ENCODE measurements at regions of chr1 and their contacts with region 1.

Region 1: DNA sequence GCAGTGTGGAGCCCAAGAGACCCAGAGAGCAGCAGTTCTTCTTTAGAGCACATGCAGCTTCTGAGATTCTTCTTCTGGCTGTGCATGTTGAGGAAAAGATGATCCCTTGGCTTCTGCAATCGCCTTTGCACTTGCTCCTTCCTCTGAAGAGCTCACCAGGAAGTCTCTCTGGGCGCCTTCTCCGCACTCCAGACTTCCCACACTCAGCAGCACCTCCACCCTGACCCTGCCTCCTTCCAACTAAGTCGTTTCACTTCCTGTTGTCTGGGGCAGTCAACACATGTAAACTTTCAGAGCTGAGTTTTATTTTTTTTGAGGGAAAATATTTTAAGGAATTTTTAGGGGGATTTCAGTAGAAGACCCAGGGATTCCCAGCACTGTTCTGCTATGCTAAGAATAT is 73.4 kb upstream of the F3 start:
- H3K4me3 Mint-ChIP-seq: peak overlapping the region; percentile 20
- H3K27ac Mint-ChIP-seq: peak overlapping the region; percentile 65
- H3K4me1 Mint-ChIP-seq: peaks cover 46% of the 10 kb centered on the region
- H3K27me3 Mint-ChIP-seq: no peaks in the 10 kb centered on the region

Region 2: DNA sequence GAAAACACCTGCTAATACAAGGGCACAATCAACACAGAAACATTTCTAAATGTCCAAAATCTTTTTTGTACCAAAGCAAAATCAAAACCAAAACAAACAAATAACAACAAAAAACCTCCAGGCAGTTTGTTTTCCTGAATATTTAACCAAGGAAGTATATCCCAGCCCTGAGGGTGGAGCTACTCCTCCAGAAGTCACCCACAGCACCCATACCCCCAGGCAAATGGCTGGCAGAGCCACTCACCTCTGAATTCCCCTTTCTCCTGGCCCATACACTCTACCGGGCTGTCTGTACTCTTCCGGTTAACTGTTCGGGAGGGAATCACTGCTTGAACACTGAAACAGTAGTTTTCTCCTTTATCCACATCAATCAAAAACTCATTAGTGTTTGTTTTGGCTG is 82.9 kb before region 1 on chr1:
- intact Hi-C with region 1: loop called (anchors 10 kb)
- H3K4me3 Mint-ChIP-seq: no peak overlapping the region
- H3K27ac Mint-ChIP-seq: no peak overlapping the region
- H3K4me1 Mint-ChIP-seq: peaks cover 6% of the 10 kb centered on the region
- H3K27me3 Mint-ChIP-seq: no peaks in the 10 kb centered on the region

Region 3: DNA sequence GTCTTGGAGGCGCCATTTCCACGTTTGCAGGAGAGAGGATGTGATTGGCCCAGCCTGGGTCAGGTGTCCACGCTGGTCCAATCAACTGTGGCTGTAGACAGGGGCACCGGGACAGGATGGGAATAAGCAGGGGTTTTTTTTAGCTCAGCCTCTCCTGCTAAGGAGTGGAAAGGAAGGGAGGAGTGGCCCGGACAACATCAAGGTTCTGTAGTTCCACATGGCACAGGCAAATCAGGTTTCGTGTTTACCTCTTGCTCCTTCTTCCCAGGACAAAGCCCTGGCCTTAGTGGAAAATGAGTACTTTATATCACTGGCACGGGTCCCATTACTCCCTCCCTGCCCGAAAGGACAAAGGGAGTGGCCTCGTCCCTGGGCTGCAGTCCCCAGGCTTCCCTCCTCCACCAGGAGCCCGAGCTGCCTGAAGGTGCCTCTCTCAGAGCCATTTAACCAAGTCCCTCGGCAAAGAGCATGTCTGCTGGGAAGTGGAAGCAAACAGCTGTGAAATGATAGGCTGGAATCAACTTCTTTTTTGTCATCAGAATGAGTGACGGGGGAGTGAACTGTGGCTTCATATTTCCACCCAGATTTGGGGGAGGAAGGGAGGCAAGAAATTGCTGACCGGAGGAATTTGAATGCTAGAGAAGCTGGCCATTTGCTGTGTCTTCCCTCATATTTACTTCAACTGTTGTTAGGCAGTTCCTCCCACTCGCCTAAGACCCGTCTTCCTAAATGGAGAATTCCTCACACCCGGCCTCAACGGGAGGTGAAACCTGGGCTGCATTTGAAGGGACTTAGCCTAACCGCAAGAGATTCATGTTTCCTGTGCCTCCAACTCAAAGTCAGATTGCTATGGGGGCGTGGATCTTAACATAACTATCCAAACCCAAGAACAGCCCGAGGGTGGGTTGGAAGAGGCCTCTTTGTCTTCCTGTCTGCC is 120.2 kb after region 1 on chr1:
- intact Hi-C with region 1: loop called (anchors 10 kb)
- H3K4me3 Mint-ChIP-seq: no peak overlapping the region
- H3K27ac Mint-ChIP-seq: peak overlapping the region; percentile 72
- H3K4me1 Mint-ChIP-seq: peaks cover 49% of the 10 kb centered on the region
- H3K27me3 Mint-ChIP-seq: no peaks in the 10 kb centered on the region

Region 4: DNA sequence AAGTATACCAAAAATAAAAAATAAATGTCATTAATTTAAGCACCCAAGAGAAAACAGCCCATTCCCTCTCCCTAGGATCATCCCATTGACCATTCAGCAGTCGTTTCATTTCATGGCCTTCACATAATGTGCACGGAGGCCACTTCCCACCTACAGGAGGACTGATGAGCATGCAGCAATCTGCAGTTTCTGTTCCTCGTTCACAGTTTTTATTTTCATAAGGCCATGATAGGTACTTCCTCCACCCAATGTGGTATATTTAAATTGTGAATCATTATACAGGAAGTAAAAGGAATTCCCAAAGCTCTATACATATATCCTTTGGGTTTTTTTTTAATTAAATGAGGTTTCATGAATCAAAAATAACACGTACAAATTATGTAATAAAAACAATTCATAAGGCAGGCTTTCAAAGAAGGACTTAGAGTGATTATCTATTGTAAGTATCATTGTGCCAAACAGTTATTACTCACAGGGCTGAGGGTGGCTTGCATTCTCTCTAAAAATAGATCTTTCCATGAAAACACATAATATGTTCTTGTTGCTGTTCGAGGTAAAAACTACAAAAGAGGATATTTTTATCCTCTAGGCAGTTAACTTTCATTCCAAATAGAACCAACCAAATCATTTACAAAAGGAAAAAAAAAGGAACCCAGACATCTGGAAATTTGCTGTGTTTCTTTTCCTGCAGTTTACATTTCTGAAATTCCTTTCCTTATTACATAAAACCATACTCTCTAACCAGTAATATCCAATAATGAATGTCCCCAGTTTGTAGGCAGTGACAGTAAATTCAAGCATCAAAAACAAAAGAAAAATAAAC is 177.7 kb after region 1 on chr1:
- intact Hi-C with region 1: loop called (anchors 10 kb)
- H3K4me3 Mint-ChIP-seq: no peak overlapping the region
- H3K27ac Mint-ChIP-seq: peak overlapping the region; percentile 13
- H3K4me1 Mint-ChIP-seq: peaks cover 34% of the 10 kb centered on the region
- H3K27me3 Mint-ChIP-seq: no peaks in the 10 kb centered on the region